ENCODE measurements at regions of chr1 and their contacts with region 1.

Region 1: GRCh38 chr1:157201767-157202166 is 63.6 kb upstream of the ETV3 start:
- DNase-seq: no peak
- CTCF ChIP-seq: no peak

Region 2: DNA sequence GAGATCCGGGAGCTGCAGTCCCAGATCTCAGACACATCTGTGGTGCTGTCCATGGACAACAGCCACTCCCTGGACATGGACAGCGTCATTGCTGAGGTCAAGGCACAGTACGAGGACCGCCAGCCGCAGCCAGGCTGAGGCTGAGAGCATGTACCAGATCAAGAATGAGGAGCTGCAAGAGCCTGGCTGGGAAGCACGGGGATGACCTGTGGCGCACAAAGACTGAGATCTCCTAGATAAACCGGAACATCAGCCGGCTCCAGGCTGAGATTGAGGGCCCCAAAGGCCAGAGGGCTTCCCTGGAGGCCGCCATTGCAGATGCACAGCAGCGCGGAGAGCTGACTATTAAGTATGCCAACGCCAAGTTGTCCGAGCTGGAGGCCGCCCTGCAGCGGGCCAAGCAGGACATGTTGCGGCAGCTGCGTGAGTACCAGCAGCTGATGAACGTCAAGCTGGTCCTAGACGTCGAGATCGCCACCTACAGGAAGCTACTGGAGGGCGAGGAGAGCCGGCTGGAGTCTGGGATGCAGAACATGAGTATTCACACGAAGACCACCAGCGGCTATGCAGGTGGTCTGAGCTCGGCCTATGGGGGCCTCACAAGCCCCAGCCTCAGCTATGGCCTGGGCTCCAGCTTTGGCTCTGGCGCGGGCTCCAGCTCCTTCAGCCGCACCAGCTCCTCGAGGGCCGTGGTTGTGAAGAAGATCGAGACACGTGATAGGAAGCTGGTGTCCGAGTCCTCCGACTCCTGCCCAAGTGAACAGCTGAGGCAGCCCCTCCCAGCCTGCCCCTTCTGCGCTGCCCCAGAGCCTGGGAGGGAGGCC is 127.6 kb before region 1 on chr1:
- in situ Hi-C with region 1: no loop called
- DNase-seq: peak; percentile 68
- CTCF ChIP-seq: peak; percentile 68

Region 3: GRCh38 chr1:157369808-157370521 is 168.2 kb after region 1 on chr1:
- in situ Hi-C with region 1: loop called (anchors 10 kb)
- DNase-seq: peak; percentile 56
- CTCF ChIP-seq: peak; percentile 83

Region 4: DNA sequence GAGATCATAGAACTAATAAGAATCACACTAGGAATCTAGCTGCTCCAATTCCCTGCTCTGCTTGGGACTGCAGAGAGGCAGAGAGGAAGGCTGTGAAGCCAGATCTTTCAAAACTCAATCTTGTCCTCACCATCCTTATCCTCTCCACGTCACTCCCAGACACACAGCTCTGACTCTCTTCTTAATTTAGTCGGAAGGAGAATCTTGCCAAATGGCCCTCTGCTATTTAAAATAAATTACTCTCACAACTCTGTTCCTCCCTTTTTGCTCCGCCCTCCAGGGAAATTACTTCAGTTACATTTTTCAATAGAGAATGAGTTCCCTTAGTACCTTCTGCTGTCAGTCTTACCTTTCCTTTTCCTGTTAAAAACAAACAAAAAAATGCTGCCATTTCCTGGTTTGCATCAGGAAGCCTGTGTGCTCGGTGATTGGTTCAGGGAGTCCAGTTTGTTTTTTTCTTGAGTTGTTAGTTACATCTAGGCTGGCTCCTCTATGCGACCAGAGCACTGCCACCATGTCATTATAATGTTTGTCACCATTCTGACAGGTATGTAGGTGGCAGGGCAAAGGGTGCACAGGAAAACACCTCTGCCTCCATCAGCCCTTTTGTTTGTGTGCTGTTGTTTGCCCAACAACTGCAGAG is 270.4 kb after region 1 on chr1:
- in situ Hi-C with region 1: no loop called
- DNase-seq: no peak
- CTCF ChIP-seq: no peak

Measured in GM13976 (cell line).